Pancreas (tissue), 10 donors: ENCODE measurements at regions of chr17 and their contacts with region 1.

Region 1: DNA sequence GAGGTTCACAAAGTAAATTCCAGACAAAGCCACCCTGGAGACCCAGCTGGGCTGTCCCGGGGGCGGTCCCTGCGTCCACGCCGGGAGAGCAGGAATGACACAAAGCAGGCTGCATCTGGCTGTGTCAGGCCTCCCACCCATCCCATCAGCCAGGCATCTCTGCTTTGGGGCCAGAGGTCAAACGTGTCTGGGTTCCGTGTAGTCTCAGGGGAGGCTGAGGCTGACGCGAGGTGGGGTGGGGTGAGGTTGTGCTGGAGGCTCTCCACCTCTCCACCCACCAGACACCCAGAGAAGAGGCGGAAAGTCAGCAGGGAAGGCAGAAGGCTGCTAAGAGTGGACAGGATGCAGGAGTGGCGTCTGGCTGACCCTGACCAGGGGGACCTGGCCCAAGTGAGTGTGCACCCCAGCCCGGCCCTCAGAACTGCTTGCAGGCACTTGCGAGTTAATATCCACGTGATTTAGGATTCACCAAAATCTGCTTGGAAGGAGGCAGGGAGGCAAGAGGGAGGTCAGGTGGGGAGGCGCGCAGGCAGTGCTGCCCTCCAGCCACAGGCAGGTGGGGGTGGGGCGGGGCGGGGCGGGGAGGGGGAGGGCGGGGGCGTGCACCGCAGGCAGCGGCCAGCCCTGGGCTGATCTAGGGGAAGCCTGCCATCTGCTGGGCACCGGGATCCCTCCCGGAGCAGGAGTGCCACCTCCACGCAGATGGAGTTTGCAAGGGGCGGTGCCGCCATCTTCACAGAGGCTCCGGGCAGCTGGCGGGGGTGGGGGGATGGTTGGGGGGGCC is 44.3 kb downstream of the TBC1D16 start:
- DNase-seq: peak; percentile 82 to 94 (median 88)
- ATAC-seq: peak; percentile 80 to 88 (median 85)
- H3K4me3 ChIP-seq: peak overlapping the region in 2 of 4 donors; percentile 12 to 39
- H3K27ac ChIP-seq: no peak overlapping the region
- H3K4me1 ChIP-seq: peaks cover 22 to 63% (median 37%) of the 10 kb centered on the region in 3 donors
- H3K27me3 ChIP-seq: no peaks in the 10 kb centered on the region
- CTCF ChIP-seq: peak; percentile 46 to 70 (median 58)

Region 2: DNA sequence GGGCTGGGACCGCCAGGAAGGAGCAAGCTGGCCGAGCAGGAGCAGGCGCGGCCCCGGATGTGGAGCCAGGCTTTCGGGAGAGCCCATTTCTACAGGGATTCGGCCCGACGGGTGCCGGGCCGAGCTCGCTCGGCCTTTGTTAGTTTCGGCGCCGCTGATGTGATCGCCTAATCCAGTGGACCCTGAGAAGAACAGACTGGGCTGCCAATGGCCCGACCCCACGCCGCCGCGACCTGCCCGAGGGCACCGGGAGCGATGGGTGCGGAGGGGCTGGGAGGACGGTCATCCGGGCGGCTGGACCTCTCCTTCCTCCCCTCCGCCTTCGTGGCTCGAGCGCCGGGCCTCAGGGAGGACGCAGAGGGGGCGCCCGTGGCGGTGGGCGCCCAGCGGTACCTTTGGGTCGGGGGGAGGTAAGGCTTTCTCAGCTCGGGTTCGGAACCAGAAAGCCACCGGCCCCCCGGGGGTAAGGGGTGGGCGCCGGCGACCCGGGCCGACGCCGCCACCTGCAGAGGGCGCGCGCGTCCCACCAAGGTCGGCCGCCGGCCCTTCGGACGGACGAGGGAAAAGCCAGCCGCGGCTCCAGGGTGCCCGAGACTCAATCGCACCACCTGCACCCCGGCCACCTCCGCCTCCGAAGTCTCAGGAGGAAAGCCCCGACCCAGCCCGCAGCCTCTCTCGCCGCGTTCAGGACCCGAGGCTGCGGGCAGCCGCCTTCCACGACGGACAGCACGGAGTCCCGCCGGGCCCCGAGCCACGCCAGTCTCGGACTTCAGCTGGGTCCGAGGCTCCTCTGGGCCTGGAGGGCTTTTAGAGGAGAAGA is 201.6 kb before region 1 on chr17:
- intact Hi-C with region 1: loop called in 1 of 3 experiments (anchors 5 kb)
- DNase-seq: peak in 3 of 6 donors; percentile 56 to 85 (median 82)
- ATAC-seq: peak; percentile 61 to 90 (median 80)
- H3K4me3 ChIP-seq: peak overlapping the region in 2 of 4 donors; percentile 16 to 30
- H3K27ac ChIP-seq: no peak overlapping the region
- H3K4me1 ChIP-seq: peaks cover 0 to 8% (median 5%) of the 10 kb centered on the region in 3 donors
- H3K27me3 ChIP-seq: peaks cover 0 to 12% (median 8%) of the 10 kb centered on the region in 4 donors
- CTCF ChIP-seq: peak; percentile 29 to 75 (median 44)

Region 3: DNA sequence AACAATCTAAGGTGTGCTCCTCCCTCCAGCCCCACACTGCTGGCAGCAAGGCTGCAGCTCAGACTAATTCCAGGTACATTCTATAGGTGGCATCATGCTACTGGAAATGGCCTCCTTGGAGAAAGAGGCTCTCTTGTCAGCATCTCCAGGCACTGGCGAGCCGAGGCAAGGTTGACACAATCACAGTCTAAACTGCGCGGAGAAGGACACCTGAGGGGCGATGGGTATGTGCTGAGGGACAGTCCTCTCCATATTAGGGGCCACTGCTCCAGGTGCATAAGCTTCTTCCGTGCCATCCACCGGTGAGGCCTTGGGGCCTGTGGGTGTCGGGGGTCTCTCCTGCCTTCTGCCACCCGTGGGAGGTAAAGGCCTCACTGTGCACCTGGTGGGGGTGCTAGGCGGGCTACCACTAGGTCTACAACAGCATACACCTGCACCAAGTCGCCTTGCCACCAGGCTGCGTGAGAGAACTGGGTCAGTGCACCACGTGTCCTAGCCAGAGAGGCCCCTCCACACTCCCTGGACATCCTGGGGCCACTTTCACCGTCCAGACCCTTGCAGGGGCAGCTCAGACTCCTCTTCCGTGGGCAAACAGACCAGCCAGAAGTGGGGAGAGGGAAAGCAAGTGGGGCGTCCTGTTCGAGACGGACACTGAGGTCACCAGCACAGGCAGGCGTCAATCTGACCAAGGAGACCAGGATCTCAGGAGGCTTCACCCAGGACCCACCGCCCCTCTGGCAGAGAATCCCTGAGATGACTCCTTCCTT is 182.4 kb before region 1 on chr17:
- intact Hi-C with region 1: loop called in 2 of 3 experiments (anchors 5 to 10 kb)
- DNase-seq: peak in 5 of 6 donors; percentile 49 to 76 (median 64)
- ATAC-seq: peak; percentile 72 to 78 (median 78)
- H3K4me3 ChIP-seq: no peak overlapping the region
- H3K27ac ChIP-seq: no peak overlapping the region
- H3K4me1 ChIP-seq: peaks cover 6 to 23% (median 8%) of the 10 kb centered on the region in 3 donors
- H3K27me3 ChIP-seq: peaks cover 3 to 50% (median 13%) of the 10 kb centered on the region in 4 donors
- CTCF ChIP-seq: peak in 2 of 4 donors; percentile 13 to 27

Region 4: DNA sequence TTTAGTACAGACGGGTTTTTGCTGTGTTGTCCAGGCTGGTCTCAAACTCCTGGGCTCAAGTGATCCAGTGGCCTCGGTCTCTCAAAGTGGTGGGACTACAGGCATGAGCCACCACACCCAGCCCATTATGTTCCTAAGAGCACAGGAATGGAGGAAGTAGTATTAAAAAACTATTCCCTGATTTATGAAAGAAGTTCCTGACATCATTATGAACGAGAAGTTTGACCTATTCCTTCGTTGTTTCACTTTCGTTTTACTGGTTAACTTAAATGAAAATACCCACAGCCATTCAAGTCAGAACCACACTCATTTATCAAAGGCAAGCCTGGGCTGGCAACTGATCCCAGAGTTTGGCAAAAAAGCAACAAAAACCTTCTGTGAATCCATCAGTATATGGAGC is 138.6 kb before region 1 on chr17:
- intact Hi-C with region 1: no loop called
- DNase-seq: no peak
- ATAC-seq: peak in 3 of 4 donors; percentile 63 to 76 (median 64)
- H3K4me3 ChIP-seq: peak overlapping the region in 1 of 4 donors; percentile 14
- H3K27ac ChIP-seq: peak overlapping the region in 2 of 4 donors; percentile 45 to 56
- H3K4me1 ChIP-seq: no peaks in the 10 kb centered on the region
- H3K27me3 ChIP-seq: no peaks in the 10 kb centered on the region
- CTCF ChIP-seq: no peak

Region 5: DNA sequence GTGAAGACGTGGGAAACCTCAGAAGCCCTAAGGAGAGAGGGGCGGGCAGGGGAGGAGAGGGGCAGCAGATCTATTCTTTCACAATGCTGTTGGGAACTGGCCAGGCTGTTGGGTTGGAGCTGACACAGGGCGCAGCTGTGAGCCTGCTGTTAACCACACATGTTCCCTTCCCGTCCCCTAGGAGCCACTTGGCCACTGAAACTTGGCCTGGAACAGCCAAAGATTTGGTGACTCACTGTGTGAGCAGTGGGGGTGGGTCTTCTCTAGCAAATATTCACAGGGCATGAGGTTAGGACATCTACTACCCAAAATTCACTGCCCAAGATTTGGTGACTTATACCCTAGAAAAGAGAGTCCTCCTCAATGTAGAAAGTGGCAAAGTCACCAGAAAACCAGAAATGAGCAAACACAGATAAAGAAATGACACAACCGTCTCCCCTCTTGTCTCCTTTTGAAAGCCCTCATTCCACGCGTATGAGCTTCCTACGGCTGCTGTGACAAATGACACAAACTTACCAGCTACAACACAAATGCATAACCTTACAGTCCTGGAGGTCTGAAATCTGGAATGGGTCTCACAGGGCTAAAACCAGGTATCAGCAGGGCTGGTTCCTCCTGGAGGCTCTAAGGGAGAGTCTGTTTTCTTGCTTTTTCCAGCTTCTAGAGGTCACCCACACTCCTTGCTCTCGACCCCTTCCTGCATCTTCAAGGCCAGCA is 38.1 kb after region 1 on chr17:
- intact Hi-C with region 1: no loop called
- DNase-seq: peak; percentile 79 to 95 (median 93)
- ATAC-seq: peak; percentile 81 to 86 (median 82)
- H3K4me3 ChIP-seq: no peak overlapping the region
- H3K27ac ChIP-seq: peak overlapping the region; percentile 82 to 94 (median 88)
- H3K4me1 ChIP-seq: peaks cover 29 to 35% (median 35%) of the 10 kb centered on the region in 3 donors
- H3K27me3 ChIP-seq: no peaks in the 10 kb centered on the region
- CTCF ChIP-seq: no peak